HEK293T (cell line): ENCODE measurements at regions of chr3 and their contacts with region 1.

Region 1: GRCh38 chr3:68893600-68894239 is 38.6 kb downstream of the TAFA4 start:
- DNase-seq: peak; percentile 11

Region 2: GRCh38 chr3:68479779-68480178 is 413.9 kb before region 1 on chr3:
- CTCF ChIA-PET with region 1: interaction called, 10 read pairs
- POLR2A ChIA-PET with region 1: no interaction called
- DNase-seq: no peak

Region 3: GRCh38 chr3:68681766-68682165 is 212.0 kb before region 1 on chr3:
- CTCF ChIA-PET with region 1: no interaction called
- POLR2A ChIA-PET with region 1: no interaction called
- DNase-seq: no peak

Region 4: GRCh38 chr3:68802111-68802870 is 91.4 kb before region 1 on chr3:
- CTCF ChIA-PET with region 1: no interaction called
- POLR2A ChIA-PET with region 1: no interaction called
- DNase-seq: no peak

Region 5: DNA sequence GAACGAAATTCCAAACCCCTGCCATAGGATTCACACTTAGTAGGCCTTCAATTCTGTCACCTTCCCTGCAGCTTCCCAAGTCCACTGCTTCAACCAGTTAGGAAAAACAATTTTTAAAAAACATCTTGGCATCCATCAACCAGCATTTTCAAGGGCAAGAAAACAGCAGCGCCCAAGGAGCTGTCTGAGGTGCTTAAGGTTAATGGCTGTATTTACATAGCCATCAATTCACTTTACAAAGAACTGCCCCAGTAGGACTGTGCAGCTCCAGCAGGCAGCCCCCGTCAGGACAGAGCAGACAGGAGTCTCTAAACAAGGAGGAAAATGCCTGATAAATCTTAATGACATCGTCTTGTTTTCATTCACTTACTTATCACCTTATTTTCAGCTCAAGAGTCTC is 25.3 kb after region 1 on chr3:
- CTCF ChIA-PET with region 1: interaction called, 11 read pairs
- POLR2A ChIA-PET with region 1: no interaction called
- DNase-seq: peak; percentile 14

Region 6: GRCh38 chr3:69386556-69387385 is 493.1 kb after region 1 on chr3:
- CTCF ChIA-PET with region 1: no interaction called
- POLR2A ChIA-PET with region 1: no interaction called
- DNase-seq: peak; percentile 42